ENCODE measurements at regions of chr15 and their contacts with region 1.

Region 1: GRCh38 chr15:59997070-59997701 is 6.9 kb upstream of the FOXB1 start:
- DNase-seq: peak; percentile 85
- ATAC-seq: peak; percentile 93
- H3K4me3 Mint-ChIP-seq: peak overlapping the region; percentile 81
- H3K27ac Mint-ChIP-seq: peak overlapping the region; percentile 82
- H3K4me1 Mint-ChIP-seq: peaks cover 79% of the 10 kb centered on the region
- H3K27me3 Mint-ChIP-seq: peaks cover 93% of the 10 kb centered on the region

Region 2: GRCh38 chr15:60128000-60128376 is 130.8 kb after region 1 on chr15:
- CTCF ChIA-PET with region 1: interaction called, 11 read pairs
- POLR2A ChIA-PET with region 1: interaction called, 3 read pairs
- DNase-seq: no peak
- ATAC-seq: no peak
- H3K4me3 Mint-ChIP-seq: peak overlapping the region; percentile 65
- H3K27ac Mint-ChIP-seq: peak overlapping the region; percentile 77
- H3K4me1 Mint-ChIP-seq: peaks cover 51% of the 10 kb centered on the region
- H3K27me3 Mint-ChIP-seq: peaks cover 9% of the 10 kb centered on the region